A549 (cell line): ENCODE measurements at regions of chr20 and their contacts with region 1.

Region 1: GRCh38 chr20:24131281-24131680 is 142.7 kb upstream of the GGTLC1 start:
- DNase-seq: no peak
- ATAC-seq: no peak
- H3K4me3 ChIP-seq: no peak overlapping the region
- H3K27ac ChIP-seq: no peak overlapping the region
- H3K4me1 ChIP-seq: no peaks in the 10 kb centered on the region
- CTCF ChIP-seq: no peak
- EP300 ChIP-seq: no peak
- POLR2A ChIP-seq: no peak
- RAD21 ChIP-seq: no peak

Region 2: GRCh38 chr20:24118441-24119175 is 12.7 kb before region 1 on chr20:
- CTCF ChIA-PET with region 1: interaction called, 19 read pairs
- POLR2A ChIA-PET with region 1: no interaction called
- DNase-seq: peak in 1 of 2 experiments; percentile 13
- ATAC-seq: peak; percentile 42 to 61; a peak in 4 of 6 replicates
- H3K4me3 ChIP-seq: no peak overlapping the region
- H3K27ac ChIP-seq: peak overlapping the region in 1 of 2 experiments; percentile 71; a peak in 3 of 6 replicates
- H3K4me1 ChIP-seq: peaks cover 15% of the 10 kb centered on the region; the same call in 2 of the 3 replicates
- CTCF ChIP-seq: no peak
- EP300 ChIP-seq: peak in 1 of 2 experiments; percentile 38; a peak in 1 of 5 replicates
- POLR2A ChIP-seq: no peak
- RAD21 ChIP-seq: no peak

Region 3: GRCh38 chr20:24176661-24177060 is 45.4 kb after region 1 on chr20:
- CTCF ChIA-PET with region 1: no interaction called
- POLR2A ChIA-PET with region 1: no interaction called
- DNase-seq: no peak
- ATAC-seq: no peak
- H3K4me3 ChIP-seq: no peak overlapping the region
- H3K27ac ChIP-seq: no peak overlapping the region
- H3K4me1 ChIP-seq: no peaks in the 10 kb centered on the region
- CTCF ChIP-seq: no peak
- EP300 ChIP-seq: no peak
- POLR2A ChIP-seq: no peak
- RAD21 ChIP-seq: no peak

Region 4: DNA sequence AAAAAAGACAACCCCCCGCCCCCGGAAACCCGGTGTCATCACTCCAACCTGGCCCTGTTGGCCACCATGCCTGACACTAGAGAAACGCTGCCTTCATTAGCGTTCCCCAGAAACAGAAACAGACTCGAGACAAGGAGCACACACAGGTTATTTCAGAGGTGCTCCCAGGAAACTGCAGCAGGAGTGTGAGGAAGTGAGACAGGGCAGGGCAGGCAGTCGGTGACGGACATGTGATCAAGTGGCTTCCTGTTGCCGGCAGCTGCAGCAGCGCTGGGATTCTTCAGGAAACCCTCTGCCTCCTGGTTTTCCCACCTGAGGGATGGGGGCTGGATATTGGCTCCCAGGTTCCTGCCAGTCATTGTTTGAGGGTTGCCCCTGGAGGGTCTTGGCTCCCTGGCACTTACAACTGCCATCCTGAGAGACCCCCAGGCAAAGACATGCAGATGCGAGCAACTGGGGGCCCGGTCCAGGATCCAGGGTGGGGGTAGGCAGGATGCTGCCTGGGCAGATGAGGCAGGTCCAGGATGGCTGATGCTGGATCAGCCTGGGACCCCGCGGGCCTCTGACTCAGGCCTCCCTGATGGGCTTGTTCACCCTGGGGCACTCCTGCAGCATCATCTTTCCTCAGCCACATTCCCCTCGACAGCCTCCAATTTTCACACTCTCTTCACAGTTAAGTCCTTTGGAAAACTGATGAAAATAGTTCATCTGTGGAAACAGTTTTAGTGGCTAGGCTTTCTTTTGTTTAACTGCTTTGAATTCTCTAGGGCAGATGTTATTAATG is 187.5 kb after region 1 on chr20:
- CTCF ChIA-PET with region 1: no interaction called
- POLR2A ChIA-PET with region 1: no interaction called
- DNase-seq: no peak
- ATAC-seq: no peak
- H3K4me3 ChIP-seq: no peak overlapping the region
- H3K27ac ChIP-seq: no peak overlapping the region
- H3K4me1 ChIP-seq: no peaks in the 10 kb centered on the region
- CTCF ChIP-seq: no peak
- EP300 ChIP-seq: no peak
- POLR2A ChIP-seq: no peak
- RAD21 ChIP-seq: no peak